Adrenal gland (tissue), 19 donors: ENCODE measurements at regions of chr10 and their contacts with region 1.

Region 1: DNA sequence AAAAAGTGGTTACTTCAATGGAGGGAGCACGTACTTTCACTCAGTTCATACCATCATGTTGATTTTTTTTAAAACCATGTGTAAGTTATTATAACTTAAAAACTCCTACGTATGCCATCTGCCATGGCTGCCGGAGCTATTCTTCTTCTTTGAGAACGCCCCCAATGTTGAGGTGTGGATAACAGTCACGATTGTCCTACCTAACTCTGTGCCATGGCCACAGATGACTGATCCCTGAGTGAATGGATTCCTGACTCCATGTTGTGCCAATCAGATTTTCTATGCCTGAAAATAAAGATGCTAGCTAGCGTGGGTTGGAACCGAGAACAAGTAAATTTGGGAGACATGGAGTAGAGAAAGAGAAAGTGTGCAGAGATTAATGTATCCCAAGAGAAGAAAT is 5.3 kb downstream of the MCMBP start:
- DNase-seq: no peak
- H3K4me3 ChIP-seq: no peak overlapping the region
- H3K27ac ChIP-seq: no peak overlapping the region
- H3K4me1 ChIP-seq: peaks cover 0 to 39% of the 10 kb centered on the region in 2 donors
- H3K27me3 ChIP-seq: no peaks in the 10 kb centered on the region
- CTCF ChIP-seq: no peak
- POLR2A ChIP-seq: no peak

Region 2: GRCh38 chr10:119761106-119761505 is 106.2 kb before region 1 on chr10:
- intact Hi-C with region 1: loop called (anchors 5 to 10 kb)
- DNase-seq: no peak
- H3K4me3 ChIP-seq: no peak overlapping the region
- H3K27ac ChIP-seq: no peak overlapping the region
- H3K4me1 ChIP-seq: no peaks in the 10 kb centered on the region
- H3K27me3 ChIP-seq: no peaks in the 10 kb centered on the region
- CTCF ChIP-seq: no peak
- POLR2A ChIP-seq: no peak